Activated T-helper 1 cell treated with anti-CD3 and anti-CD28 coated beads, Interleukin-12 subunit alpha, Interleukin-12 subunit beta, Interleukin-2, Interleukin-4 antibody, amounts not matched to agents 30 ng/mL and 10 ng/mL and 1 ng/mL, durations not matched to agents 14 hours and 24 hours and 36 hours (primary cell): ENCODE measurements at regions of chr3 and their contacts with region 1.

Region 1: GRCh38 chr3:149273096-149273751 is 51.6 kb upstream of the CP start:
- DNase-seq: peak; percentile 17
- H3K4me3 Mint-ChIP-seq: no peak overlapping the region
- H3K27ac Mint-ChIP-seq: no peak overlapping the region
- H3K4me1 Mint-ChIP-seq: peaks cover 18% of the 10 kb centered on the region
- H3K27me3 Mint-ChIP-seq: peaks cover 17% of the 10 kb centered on the region

Region 2: DNA sequence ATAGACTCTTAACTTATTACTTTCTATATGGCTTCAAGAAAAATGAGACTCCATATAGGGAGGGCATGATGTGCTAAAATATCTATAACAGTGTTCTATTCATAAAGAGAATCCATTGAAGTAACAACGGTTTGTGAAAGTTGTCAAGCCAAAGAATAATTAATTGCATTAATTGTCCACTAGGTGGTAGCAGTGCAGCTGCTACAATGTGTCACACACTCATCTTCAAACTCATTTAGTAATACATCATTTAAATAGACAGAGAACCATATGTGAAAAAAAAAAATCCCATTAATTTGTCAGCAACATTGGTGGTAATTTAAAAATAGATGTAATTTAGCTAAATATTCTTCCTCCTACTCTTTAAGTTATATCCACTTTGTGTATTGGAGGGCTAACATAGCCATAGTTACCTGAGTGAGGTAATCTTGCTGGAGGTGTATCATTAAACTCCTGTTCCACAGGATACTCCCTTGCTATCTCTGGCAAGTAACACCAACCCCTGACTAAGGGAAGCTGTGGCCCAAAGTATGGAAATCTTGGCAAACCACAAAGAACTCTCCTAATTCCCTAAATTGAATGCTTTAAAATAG is 411.9 kb before region 1 on chr3:
- intact Hi-C with region 1: loop called (anchors 5 kb)
- DNase-seq: no peak
- H3K4me3 Mint-ChIP-seq: no peak overlapping the region
- H3K27ac Mint-ChIP-seq: no peak overlapping the region
- H3K4me1 Mint-ChIP-seq: no peaks in the 10 kb centered on the region
- H3K27me3 Mint-ChIP-seq: peaks cover 16% of the 10 kb centered on the region

Region 3: GRCh38 chr3:149120051-149120972 is 152.9 kb before region 1 on chr3:
- intact Hi-C with region 1: loop called (anchors 1 kb)
- DNase-seq: no peak
- H3K4me3 Mint-ChIP-seq: no peak overlapping the region
- H3K27ac Mint-ChIP-seq: no peak overlapping the region
- H3K4me1 Mint-ChIP-seq: peaks cover 5% of the 10 kb centered on the region
- H3K27me3 Mint-ChIP-seq: peaks cover 9% of the 10 kb centered on the region

Region 4: GRCh38 chr3:149152420-149152819 is 120.8 kb before region 1 on chr3:
- intact Hi-C with region 1: loop called (anchors 1 kb)
- DNase-seq: peak; percentile 2
- H3K4me3 Mint-ChIP-seq: no peak overlapping the region
- H3K27ac Mint-ChIP-seq: no peak overlapping the region
- H3K4me1 Mint-ChIP-seq: peaks cover 19% of the 10 kb centered on the region
- H3K27me3 Mint-ChIP-seq: no peaks in the 10 kb centered on the region

Region 5: GRCh38 chr3:149224736-149225594 is 48.3 kb before region 1 on chr3:
- intact Hi-C with region 1: loop called (anchors 1 kb)
- DNase-seq: peak; percentile 46
- H3K4me3 Mint-ChIP-seq: peak overlapping the region; percentile 78
- H3K27ac Mint-ChIP-seq: peak overlapping the region; percentile 89
- H3K4me1 Mint-ChIP-seq: peaks cover 30% of the 10 kb centered on the region
- H3K27me3 Mint-ChIP-seq: peaks cover 2% of the 10 kb centered on the region

Region 6: DNA sequence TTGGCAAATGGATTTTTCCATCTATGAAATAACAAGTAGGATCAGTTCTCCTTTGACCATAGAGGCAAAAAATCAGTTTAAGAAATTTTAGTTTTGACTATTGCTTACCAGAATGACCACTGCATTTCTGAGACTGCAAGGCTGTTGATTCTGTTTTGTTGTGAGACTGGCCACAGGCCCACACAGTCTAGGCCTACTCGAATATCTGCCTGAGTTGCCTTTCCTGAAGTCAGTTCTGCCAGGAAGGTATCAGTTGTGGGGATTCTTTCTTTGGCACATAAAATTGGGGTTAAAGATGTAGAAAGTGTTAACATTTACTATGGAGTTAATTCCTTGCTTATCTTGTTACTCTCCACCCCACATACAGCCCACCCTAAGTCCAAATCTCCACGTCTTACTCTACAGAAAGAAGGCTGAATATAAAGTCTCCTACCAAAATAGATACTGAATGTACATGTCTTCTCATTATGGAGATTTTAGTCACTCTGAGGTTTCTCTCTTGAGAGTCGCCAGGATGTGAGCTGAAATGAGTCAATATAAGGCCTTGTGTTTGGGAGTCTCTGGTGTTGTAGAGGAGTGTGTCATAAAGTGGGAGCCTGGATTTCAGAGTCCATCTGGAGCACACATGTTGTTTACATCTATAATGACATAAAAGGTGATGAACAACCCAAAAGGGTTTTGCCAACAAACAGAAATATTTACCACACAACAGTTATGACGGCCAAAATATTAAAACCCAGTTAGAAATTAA is 429.6 kb after region 1 on chr3:
- intact Hi-C with region 1: no loop called
- DNase-seq: no peak
- H3K4me3 Mint-ChIP-seq: no peak overlapping the region
- H3K27ac Mint-ChIP-seq: peak overlapping the region; percentile 64
- H3K4me1 Mint-ChIP-seq: peaks cover 33% of the 10 kb centered on the region
- H3K27me3 Mint-ChIP-seq: no peaks in the 10 kb centered on the region